Activated CD8-positive, alpha-beta T cell treated with anti-CD3 and anti-CD28 coated beads for 36 hours (primary cell): ENCODE measurements at regions of chr5 and their contacts with region 1.

Region 1: GRCh38 chr5:141186897-141187512 is at the start of gene PCDHB9:
- DNase-seq: peak; percentile 59
- ATAC-seq: no peak
- H3K4me3 Mint-ChIP-seq: peak within 1 kb of the TSS; percentile 6
- H3K27ac Mint-ChIP-seq: no peak within 1 kb of the TSS
- H3K4me1 Mint-ChIP-seq: peaks cover 4% of the 10 kb centered on the region
- H3K27me3 Mint-ChIP-seq: peaks cover 42% of the 10 kb centered on the region
- CTCF ChIP-seq: peak; percentile 56
- total RNA-seq, gene PCDHB9: not detected

Region 2: DNA sequence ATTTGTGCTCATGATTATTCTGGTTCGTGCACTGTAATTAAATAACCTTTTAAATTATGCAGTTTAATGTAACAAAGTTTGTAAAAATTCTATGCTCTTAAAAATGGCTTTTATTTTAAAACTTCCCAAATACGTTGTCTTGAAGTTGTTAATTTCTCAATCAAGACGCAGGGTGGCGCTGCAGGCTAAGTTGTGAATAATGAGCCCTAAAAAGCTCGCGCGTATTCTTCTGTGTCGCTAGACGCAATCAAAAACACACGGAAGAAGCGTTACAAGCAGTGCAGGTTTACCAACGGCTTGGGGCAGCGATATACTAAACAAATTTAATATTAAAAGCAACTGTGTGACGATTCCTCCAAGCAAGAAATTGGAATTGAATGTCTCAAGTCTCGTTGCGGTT is 65.4 kb before region 1 on chr5 and contains the start of gene PCDHB4:
- CTCF ChIA-PET with region 1: no interaction called
- POLR2A ChIA-PET with region 1: no interaction called
- intact Hi-C with region 1: no loop called
- DNase-seq: peak; percentile 26
- ATAC-seq: no peak
- H3K4me3 Mint-ChIP-seq: no peak within 1 kb of the TSS
- H3K27ac Mint-ChIP-seq: no peak within 1 kb of the TSS
- H3K4me1 Mint-ChIP-seq: no peaks in the 10 kb centered on the region
- H3K27me3 Mint-ChIP-seq: peaks cover 17% of the 10 kb centered on the region
- CTCF ChIP-seq: peak; percentile 43
- total RNA-seq, gene PCDHB4: not detected

Region 3: DNA sequence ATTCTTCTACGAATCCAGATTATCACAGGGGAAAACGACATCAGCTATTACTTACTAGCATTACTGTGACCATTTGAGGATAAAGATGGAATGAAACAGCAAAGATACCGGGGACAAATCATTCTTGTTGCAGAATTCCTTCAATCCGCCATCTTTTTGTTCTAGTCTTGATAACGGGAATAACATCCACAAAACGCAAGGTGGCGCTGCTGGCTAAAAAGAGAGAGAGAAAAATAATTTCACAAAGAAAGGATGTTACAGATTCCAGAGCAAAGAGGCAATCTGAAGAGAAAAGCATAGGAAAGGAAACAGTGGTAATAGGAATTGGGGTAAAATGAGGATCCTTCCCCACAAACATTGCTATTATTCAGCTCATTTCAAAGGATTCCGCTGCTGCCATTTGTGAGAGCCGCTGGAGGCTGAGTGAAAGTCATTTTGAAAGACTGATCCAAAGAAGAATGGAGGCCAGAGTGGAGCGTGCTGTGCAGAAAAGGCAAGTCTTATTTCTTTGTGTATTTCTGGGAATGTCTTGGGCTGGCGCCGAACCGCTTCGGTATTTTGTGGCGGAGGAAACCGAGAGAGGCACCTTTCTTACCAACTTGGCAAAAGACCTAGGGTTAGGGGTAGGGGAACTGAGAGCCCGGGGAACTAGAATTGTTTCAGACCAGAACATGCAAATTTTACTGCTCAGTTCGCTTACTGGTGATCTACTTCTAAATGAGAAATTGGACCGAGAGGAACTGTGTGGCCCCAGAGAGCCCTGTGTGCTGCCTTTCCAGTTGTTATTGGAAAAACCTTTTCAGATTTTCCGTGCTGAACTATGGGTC is 14.4 kb before region 1 on chr5 and contains the start of gene PCDHB7:
- CTCF ChIA-PET with region 1: interaction called, 11 read pairs
- POLR2A ChIA-PET with region 1: no interaction called
- intact Hi-C with region 1: no loop called
- DNase-seq: peak; percentile 26
- ATAC-seq: no peak
- H3K4me3 Mint-ChIP-seq: no peak within 1 kb of the TSS
- H3K27ac Mint-ChIP-seq: no peak within 1 kb of the TSS
- H3K4me1 Mint-ChIP-seq: peaks cover 4% of the 10 kb centered on the region
- H3K27me3 Mint-ChIP-seq: peaks cover 35% of the 10 kb centered on the region
- CTCF ChIP-seq: peak; percentile 73
- total RNA-seq, gene PCDHB7: not detected

Region 4: DNA sequence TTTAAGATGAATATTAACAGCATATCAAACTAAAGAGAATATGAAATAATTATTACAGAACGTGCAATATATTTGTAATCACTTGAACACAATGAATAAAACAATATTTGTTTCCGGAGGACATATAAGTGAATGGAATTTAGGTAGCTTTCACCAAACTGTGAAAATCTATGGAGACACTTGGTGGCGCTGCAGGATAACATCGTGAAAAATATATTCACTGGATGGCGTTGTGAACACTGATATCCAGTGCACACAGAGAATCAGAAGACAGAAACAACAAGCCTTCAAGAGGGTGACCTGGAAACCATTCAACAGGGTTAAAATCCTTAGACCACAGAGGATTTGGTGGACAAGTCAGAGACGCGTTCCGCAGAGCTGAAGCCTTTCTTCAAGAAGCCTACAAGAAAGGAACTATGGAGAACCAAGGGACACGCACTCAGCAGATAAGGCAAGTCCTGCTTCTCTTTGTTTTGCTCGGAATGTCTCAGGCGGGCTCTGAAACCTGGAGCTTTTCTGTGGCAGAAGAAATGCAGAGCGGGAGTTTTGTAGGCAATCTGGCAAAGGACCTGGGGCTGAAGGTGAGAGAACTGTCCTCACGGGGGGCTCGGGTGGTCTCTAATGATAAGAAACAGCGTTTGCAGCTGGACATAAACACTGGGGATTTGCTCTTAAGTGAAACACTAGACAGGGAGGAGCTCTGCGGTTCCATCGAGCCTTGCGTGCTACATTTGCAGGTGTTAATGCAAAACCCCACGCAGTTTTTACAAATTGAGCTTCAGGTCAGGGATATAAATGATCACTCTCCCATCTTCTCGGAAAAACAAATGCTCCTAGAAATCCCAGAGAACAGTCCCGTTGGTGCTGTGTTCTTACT is 12.6 kb after region 1 on chr5 and contains the start of gene PCDHB11:
- CTCF ChIA-PET with region 1: interaction called, 12 read pairs
- POLR2A ChIA-PET with region 1: no interaction called
- intact Hi-C with region 1: no loop called
- DNase-seq: peak; percentile 13
- ATAC-seq: no peak
- H3K4me3 Mint-ChIP-seq: no peak within 1 kb of the TSS
- H3K27ac Mint-ChIP-seq: no peak within 1 kb of the TSS
- H3K4me1 Mint-ChIP-seq: no peaks in the 10 kb centered on the region
- H3K27me3 Mint-ChIP-seq: peaks cover 16% of the 10 kb centered on the region
- CTCF ChIP-seq: no peak
- total RNA-seq, gene PCDHB11: not detected